A673 (cell line): ENCODE measurements at regions of chr9 and their contacts with region 1.

Region 1: GRCh38 chr9:136651860-136652259 is 10.9 kb upstream of the EGFL7 start:
- DNase-seq: no peak
- H3K4me3 ChIP-seq: no peak overlapping the region
- H3K27ac ChIP-seq: no peak overlapping the region
- H3K4me1 ChIP-seq: peaks cover 14% of the 10 kb centered on the region
- H3K27me3 ChIP-seq: no peaks in the 10 kb centered on the region
- CTCF ChIP-seq: no peak

Region 2: GRCh38 chr9:135736272-135736978 is 915.4 kb before region 1 on chr9:
- CTCF ChIA-PET with region 1: no interaction called
- POLR2A ChIA-PET with region 1: no interaction called
- intact Hi-C with region 1: no loop called
- DNase-seq: no peak
- H3K4me3 ChIP-seq: no peak overlapping the region
- H3K27ac ChIP-seq: no peak overlapping the region
- H3K4me1 ChIP-seq: no peaks in the 10 kb centered on the region
- H3K27me3 ChIP-seq: peaks cover 9% of the 10 kb centered on the region
- CTCF ChIP-seq: no peak

Region 3: GRCh38 chr9:136267261-136268111 is 384.4 kb before region 1 on chr9:
- CTCF ChIA-PET with region 1: no interaction called
- POLR2A ChIA-PET with region 1: no interaction called
- intact Hi-C with region 1: no loop called
- DNase-seq: peak; percentile 89
- H3K4me3 ChIP-seq: peak overlapping the region; percentile 49
- H3K27ac ChIP-seq: peak overlapping the region; percentile 58
- H3K4me1 ChIP-seq: peaks cover 4% of the 10 kb centered on the region
- H3K27me3 ChIP-seq: no peaks in the 10 kb centered on the region
- CTCF ChIP-seq: peak; percentile 48; the same call in 1 of the 2 replicates

Region 4: GRCh38 chr9:136365775-136366222 is 286.1 kb before region 1 on chr9:
- CTCF ChIA-PET with region 1: no interaction called
- POLR2A ChIA-PET with region 1: interaction called, 12 read pairs
- intact Hi-C with region 1: no loop called
- DNase-seq: no peak
- H3K4me3 ChIP-seq: no peak overlapping the region
- H3K27ac ChIP-seq: no peak overlapping the region
- H3K4me1 ChIP-seq: peaks cover 5% of the 10 kb centered on the region
- H3K27me3 ChIP-seq: no peaks in the 10 kb centered on the region
- CTCF ChIP-seq: no peak

Region 5: DNA sequence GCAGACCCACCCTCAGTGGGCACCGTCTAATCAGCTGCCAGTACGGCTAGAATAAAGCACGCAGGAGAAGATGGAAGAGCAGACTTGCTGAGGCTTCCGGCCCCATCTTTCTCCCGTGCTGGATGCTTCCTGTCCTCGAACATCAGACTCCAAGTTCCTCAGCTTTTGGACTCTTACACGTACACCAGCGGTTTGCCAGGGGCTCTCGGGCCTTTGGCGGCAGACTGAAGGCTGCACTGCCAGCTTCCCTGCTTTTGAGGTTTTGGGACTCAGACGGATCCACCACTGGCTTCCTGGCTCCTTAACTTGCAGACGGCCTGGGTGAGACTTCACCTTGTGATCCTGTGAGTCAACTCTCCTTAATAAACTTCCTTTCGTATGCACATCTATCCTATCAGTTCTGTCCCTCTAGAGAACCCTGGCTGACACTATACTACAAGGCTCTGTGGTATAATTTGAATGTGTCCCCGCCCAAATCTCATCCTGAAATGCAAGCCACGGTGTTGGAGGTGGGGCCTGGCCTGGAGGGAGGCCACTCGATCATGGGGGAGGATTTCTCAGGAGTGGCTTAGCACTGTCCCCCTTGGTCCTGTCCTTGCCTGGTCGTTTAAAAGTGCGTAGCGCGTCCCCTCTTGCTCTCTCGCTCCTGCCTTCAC is 681.3 kb after region 1 on chr9:
- CTCF ChIA-PET with region 1: no interaction called
- POLR2A ChIA-PET with region 1: no interaction called
- intact Hi-C with region 1: no loop called
- DNase-seq: no peak
- H3K4me3 ChIP-seq: no peak overlapping the region
- H3K27ac ChIP-seq: no peak overlapping the region
- H3K4me1 ChIP-seq: no peaks in the 10 kb centered on the region
- H3K27me3 ChIP-seq: peaks cover under 1% of the 10 kb centered on the region
- CTCF ChIP-seq: no peak